Motor neuron (in vitro differentiated cells): ENCODE measurements at regions of chr6 and their contacts with region 1.

Region 1: DNA sequence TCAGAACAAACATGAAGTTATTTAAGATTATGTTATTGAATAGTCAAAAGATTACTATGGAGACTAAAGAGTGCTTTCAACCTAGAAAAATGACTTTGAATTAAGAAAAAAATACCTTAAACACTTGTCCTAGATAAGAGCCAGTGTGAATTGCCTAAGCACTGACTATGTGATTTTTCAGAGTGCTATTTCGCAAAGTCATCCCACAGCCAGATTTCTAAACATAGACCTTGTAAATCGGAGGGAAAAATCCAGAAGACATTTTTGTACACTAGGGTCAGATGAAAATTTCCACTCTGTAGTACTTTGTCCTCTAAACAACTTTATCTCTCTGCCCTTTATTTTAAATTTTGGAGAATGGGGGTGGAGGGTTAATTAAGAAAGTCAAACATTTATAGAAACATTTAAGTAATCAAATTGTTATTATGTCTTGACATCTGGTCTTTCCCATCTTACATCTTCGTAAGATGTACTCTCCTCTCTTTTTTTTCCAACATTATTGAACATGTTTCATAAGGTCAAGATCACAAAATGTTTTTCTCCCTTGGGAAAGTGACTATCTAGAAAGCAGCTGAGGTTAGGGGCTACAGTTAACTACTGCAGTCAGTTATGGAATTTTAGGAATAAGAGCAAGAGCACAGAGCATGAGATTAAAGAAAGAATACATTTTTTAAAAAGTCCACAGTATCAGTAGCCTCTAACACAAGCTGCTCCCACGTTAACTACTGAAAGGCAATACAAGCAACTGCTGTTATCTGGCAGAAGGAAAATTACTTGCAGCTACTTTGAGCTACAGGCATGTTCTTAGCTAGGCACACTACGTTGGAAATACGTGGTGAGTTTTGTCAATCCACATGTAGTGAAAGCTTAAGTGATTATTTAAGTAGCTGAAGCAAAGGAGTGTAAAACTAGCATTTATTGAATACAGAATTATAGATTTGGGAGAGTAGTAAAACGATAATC is 648.5 kb downstream of the HTR1B start:
- ATAC-seq: no peak
- H3K4me3 ChIP-seq: no peak overlapping the region
- H3K27ac ChIP-seq: no peak overlapping the region
- H3K4me1 ChIP-seq: no peaks in the 10 kb centered on the region

Region 2: DNA sequence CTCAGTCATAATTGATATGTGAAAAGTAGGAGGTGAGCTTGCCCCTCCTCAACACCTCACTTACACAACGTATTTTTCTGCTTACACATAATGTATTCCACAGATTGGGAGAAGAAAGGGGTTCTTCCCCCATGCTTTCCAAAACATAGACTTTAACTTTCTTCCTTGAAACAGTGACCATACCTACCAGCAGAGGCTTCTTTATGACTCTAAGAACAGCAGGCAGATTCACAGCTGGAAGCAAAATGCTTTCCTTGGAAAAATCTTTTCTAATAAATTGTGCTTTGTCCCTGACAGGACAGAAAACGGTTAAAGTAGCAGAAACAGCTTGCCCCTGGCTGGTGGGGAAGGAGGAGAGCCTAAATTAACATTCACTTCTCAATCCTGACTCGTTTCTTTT is 113.2 kb before region 1 on chr6:
- in situ Hi-C with region 1: loop called in 1 of 9 experiments (anchors 25 kb)
- ATAC-seq: peak in 2 of 8 experiments; percentile 11 to 21
- H3K4me3 ChIP-seq: no peak overlapping the region
- H3K27ac ChIP-seq: no peak overlapping the region
- H3K4me1 ChIP-seq: peaks cover 0 to 5% of the 10 kb centered on the region in 2 donors